ENCODE measurements at regions of chr7 and their contacts with region 1.

Region 1: DNA sequence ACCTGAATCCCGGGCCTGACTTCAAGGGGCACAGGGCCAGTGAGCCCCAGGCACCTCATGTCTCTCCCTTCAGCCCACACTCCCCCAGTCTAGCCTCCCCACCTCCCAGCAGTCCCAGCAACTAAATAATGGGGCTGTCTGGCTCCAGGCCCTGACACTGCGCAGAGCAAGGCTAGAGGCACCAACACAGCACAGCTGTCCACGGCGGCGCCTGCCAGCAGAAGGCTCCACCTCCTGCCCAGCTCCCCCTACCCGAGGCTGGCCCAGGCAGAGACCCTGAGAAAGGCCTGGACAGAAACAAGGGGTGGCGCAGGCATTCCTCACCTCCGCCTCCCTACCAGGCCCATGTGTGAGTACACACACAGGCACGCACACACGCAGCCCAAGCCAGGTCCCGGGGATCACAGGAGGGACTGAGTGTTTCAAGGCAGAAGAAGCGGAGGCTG is 6.1 kb downstream of the KCNH2 start:
- DNase-seq: peak; percentile 91

Region 2: DNA sequence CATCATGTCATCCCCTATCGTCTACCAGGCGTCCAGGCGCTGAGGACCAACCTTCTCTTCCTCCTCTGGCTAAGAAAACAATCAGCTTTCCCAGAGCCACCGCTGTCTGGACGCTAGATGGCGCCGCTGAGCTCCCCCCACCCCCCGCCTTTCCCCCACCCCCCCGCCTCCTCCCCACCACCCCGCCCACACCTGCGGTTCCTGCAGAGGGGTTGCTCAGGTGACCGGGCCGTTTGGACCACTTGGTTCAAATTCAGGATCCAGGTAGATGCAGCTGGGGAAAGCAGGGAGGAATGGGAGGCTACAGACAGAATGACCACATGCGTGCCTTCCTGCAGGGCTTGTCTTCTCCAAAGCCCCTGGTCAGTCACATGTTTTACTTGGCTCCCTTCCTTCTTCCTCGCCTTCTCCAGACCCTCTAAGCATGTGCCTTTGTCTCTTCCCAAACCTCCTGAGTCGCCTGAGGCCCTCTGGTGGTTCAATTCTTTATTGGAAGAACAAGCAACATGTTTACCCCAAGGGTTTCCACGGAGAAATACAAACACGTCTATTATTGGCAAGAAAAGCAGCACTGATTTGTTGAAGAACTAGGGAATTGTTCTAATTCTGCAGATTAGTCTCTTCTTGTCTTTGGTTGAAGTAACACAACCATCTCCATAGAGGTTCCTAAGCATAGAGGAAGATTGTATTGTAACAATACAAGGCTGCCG is 95.1 kb before region 1 on chr7:
- intact Hi-C with region 1: no loop called
- DNase-seq: no peak

Region 3: DNA sequence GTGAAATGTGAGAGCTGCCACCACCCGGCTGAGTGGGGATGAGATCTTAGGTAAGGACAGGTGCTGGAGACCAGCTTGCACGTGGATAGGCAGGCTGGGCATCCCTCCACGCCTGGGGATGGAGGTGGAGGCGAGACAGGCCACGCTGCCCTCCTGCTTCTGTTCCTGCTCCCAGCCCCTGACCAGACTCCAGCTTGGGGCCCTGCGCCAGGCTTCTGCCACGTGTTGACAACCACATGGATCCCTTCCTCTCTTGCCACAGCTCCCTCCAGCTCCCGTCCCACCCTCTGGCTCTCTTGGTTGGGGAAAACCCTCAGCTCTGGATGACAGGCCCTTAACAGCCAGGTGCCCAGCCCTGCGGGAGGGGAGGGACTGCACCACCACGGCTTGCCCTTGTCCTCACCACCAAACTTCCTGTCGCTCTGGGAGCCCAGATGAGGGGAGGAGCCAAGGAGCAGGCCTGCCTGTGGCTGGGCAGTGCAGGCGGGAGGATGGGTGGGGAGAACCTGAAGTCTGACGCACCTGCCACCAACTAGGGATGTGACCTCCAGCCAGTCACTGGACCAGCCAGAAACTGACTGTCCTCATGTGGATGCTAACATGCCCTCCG is 30.0 kb before region 1 on chr7:
- intact Hi-C with region 1: loop called (anchors 1 kb)
- DNase-seq: peak; percentile 84

Measured in cardiac septum (tissue), 1 donor.